GM10248 (cell line): ENCODE measurements at regions of chr13 and their contacts with region 1.

Region 1: DNA sequence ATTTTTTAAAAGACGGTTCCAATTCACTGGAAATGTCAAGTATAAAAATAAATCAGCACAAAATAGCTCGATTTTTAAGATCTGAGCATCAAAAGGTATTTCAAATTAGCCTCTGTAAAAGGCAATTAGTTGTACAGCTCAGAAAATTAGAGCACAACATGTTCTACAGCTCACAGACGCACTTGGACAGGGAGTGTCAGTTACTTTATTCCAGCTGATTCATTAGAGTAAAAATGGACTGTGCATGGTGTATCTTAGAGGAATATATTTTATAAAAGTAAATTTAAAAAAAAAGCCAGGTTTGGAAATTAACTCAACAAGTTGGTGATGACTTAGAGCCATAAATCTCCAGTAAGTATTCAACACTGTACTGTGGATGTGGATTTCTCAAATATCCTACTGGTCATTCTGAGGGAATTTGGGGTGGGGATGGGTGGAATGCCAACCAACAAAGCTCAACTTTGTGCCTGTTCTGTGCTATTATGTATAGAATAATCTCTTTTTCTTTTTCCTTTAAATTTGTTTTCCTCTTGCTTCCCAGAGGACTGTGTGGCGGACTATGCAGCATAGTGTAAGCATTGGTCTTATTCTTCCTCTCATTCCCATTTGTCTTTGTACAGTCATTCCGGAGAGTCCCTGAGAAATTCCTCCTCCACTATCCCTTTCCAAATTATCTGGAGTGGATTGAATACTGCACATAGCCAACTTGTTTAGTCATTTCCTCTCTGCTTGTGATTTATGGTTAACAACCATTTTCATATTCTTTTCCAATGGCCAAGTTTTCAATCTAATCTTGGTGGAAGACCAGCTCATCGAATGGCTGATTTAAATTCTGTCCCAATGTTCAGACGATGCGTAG is 169.3 kb downstream of the DCT start:
- DNase-seq: no peak
- CTCF ChIP-seq: no peak

Region 2: DNA sequence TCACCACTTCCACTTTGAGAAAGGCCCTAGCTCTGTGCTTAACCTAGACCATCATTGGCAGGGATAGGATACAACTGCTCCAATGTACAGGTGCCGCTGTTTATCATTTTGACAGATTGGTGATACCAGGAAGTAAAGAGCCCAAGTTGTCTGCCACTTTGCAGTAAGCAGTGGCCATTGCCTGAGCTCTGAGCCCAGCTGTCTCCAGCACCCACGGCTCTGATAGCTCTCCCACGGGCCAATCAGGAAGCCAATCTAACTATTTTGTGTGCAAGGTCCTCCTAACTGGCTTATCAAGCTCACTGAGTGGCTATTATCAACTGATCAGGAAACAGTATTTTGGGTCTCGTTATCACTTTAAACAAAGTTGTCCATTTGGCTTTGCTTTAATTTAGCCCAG is 11.9 kb before region 1 on chr13:
- CTCF ChIA-PET with region 1: interaction called, 10 read pairs
- POLR2A ChIA-PET with region 1: no interaction called
- DNase-seq: no peak
- CTCF ChIP-seq: no peak

Region 3: GRCh38 chr13:94515374-94515773 is 205.1 kb after region 1 on chr13:
- CTCF ChIA-PET with region 1: no interaction called
- POLR2A ChIA-PET with region 1: no interaction called
- DNase-seq: no peak
- CTCF ChIP-seq: no peak